BJ (cell line): ENCODE measurements at regions of chr1 and their contacts with region 1.

Region 1: DNA sequence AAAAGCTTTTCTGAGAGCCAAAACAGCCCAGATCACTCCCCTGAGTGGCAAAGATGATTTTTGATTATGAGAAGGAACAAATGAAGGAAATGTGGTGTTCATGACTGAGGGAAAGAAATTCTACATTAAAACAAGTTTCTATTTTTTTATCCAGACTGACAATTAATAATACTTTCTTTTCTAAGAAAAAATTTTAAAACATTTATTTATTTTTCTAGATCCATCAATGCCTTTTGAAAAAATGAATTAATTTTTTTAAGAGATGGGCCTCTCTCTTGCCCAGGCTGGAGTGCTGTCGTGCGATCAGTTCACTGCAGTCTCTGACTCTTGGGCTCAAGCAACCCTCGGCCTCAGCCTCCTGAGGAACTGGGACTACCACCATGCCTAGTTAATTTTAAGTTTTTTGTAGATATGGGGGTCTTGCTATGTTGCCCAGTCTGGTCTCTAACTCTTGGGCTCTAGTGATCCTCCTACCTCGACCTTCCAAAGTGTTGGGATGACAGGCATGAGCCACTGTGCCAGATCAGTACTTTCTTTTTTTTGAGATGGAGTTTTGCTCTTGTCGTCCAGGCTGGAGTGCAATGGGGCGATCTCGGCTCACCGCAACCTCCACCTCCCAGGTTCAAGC is 11.2 kb upstream of the TXNIP start:
- DNase-seq: no peak
- H3K4me3 ChIP-seq: no peak overlapping the region
- H3K27me3 ChIP-seq: no peaks in the 10 kb centered on the region
- CTCF ChIP-seq: no peak

Region 2: GRCh38 chr1:145996433-145997015 is 11.1 kb before region 1 on chr1 and contains the start of gene TXNIP:
- CTCF ChIA-PET with region 1: interaction called, 14 read pairs
- POLR2A ChIA-PET with region 1: interaction called, 4 read pairs
- DNase-seq: peak; percentile 86
- H3K4me3 ChIP-seq: peak within 1 kb of the TSS; percentile 56
- H3K27me3 ChIP-seq: no peaks in the 10 kb centered on the region
- CTCF ChIP-seq: no peak
- polyA plus RNA-seq, gene TXNIP: 212 and 258 TPM in 2 replicates